ENCODE measurements at regions of chr7 and their contacts with region 1.

Region 1: DNA sequence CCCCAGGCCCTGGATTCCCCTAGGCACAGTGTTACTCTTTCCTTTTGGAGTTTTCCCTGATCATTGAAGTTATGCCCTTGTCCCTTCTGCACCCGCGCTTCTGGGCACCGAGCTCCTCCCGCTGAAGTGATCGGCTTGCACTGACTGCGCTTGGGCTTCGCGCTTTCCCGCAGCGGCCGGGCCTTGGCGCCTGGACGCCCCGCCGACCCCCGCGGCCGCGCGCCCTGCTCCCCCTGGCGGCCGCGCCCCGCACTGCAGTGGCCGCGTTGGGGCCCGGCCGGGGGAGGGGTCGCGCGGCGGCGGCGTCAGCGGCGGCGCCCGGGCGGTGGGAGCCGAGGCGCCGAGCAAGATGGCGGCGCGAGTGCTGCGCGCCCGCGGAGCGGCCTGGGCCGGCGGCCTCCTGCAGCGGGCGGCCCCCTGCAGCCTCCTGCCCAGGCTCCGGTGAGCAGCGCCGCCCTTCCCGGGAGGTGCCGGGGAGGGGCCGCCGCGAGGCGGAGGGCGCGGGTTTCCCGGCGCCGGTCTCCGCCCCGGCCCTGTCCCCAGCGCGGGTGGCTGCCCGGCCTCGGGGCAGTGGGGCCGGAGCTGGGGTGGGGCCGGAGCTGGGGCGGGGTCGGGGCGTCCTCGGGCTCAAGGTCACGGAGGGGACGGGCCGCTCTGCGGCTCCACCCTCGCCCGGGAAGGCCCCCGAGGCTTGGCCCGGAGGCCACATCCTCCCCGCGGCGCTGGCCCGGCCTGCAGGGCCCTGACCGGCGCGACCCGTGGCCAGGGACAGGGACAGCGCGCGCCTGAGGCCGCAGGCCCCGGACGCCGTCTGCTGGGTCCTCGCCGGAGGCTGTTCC is at the start of gene NIPSNAP2:
- DNase-seq: peak; percentile 85 to 89 (median 87)
- H3K4me3 ChIP-seq: peak within 1 kb of the TSS in 3 of 4 donors; percentile 23 to 91 (median 63)
- H3K27ac ChIP-seq: peak within 1 kb of the TSS; percentile 77 to 99 (median 96)
- H3K4me1 ChIP-seq: peaks cover 19 to 22% of the 10 kb centered on the region in 2 donors
- H3K27me3 ChIP-seq: no peaks in the 10 kb centered on the region
- CTCF ChIP-seq: peak in 3 of 6 experiments; percentile 57 to 93 (median 81)
- POLR2A ChIP-seq: peak; percentile 79 to 82
- total RNA-seq, gene NIPSNAP2: 85.9 to 171 (median 102) TPM

Region 2: GRCh38 chr7:55838595-55838994 is 125.9 kb before region 1 on chr7:
- intact Hi-C with region 1: no loop called
- DNase-seq: no peak
- H3K4me3 ChIP-seq: no peak overlapping the region
- H3K27ac ChIP-seq: no peak overlapping the region
- H3K4me1 ChIP-seq: no peaks in the 10 kb centered on the region
- H3K27me3 ChIP-seq: no peaks in the 10 kb centered on the region
- CTCF ChIP-seq: no peak
- POLR2A ChIP-seq: no peak

Region 3: GRCh38 chr7:55887821-55888247 is 76.6 kb before region 1 on chr7:
- intact Hi-C with region 1: loop called in 1 of 2 experiments (anchors 5 kb)
- DNase-seq: peak in 1 of 7 donors; percentile 14
- H3K4me3 ChIP-seq: peak overlapping the region in 2 of 4 donors; percentile 37 to 55
- H3K27ac ChIP-seq: peak overlapping the region in 3 of 5 donors; percentile 37 to 96 (median 63)
- H3K4me1 ChIP-seq: peaks cover 0 to 5% of the 10 kb centered on the region in 2 donors
- H3K27me3 ChIP-seq: no peaks in the 10 kb centered on the region
- CTCF ChIP-seq: no peak
- POLR2A ChIP-seq: no peak